Esophagus squamous epithelium (tissue), 5 donors: ENCODE measurements at regions of chr14 and their contacts with region 1.

Region 1: DNA sequence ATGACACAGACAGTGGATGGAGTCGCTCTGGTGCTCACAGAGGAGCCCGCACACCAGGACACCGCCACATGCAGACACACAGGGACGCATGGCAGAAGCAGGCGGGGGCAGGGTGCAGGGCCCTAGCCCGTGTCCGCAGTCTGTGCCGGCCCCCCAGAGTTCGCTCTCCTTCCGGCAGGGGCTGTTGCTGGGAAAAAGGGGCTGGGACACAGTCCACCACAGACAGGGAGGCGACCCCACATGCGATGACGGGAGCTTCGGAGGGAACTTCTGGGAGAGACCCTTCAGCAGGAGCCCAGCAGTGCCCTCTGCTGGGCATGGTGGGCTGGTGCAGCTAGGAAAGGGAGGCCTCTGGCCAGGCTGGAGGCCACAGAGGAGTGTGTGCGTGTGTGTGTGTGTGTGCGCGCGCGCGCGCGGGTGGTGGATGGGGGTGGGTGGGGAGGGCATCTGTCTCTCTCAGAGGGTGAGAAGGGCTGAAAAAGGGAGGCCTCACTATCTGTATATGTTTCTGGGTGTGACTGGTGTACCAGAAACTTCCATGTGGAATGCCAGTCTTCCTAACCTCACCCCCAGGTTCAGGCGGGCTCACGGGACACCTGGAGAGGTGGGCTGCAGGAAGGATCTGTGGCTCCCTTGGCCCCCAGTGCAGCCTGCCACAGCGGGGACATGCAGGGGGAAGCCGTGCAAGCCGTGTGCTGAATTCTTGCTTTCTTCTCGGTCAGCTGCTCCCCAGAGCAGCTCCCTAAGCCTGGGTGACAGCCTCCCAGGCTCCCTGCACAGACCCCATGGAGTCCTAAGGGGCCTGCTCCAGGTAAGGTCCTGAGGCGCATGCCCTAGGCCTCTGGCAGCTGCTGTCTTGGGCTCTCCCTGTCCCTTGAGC is 60.7 kb downstream of the PLEKHG3 start:
- DNase-seq: no peak
- H3K4me3 ChIP-seq: peak overlapping the region in 3 of 4 donors; percentile 21 to 56 (median 29)
- H3K27ac ChIP-seq: peak overlapping the region; percentile 11 to 86 (median 48)
- H3K4me1 ChIP-seq: peaks cover 24 to 55% (median 34%) of the 10 kb centered on the region in 3 donors
- H3K27me3 ChIP-seq: no peaks in the 10 kb centered on the region
- CTCF ChIP-seq: peak; percentile 85 to 93 (median 91)
- POLR2A ChIP-seq: no peak

Region 2: GRCh38 chr14:64337901-64338615 is 426.8 kb before region 1 on chr14:
- intact Hi-C with region 1: no loop called
- DNase-seq: no peak
- H3K4me3 ChIP-seq: peak overlapping the region; percentile 53 to 84 (median 71)
- H3K27ac ChIP-seq: peak overlapping the region; percentile 84 to 94 (median 88)
- H3K4me1 ChIP-seq: peaks cover 4 to 21% (median 4%) of the 10 kb centered on the region in 3 donors
- H3K27me3 ChIP-seq: no peaks in the 10 kb centered on the region
- CTCF ChIP-seq: no peak
- POLR2A ChIP-seq: peak in 1 of 4 donors; percentile 43

Region 3: GRCh38 chr14:64671591-64671990 is 93.3 kb before region 1 on chr14:
- intact Hi-C with region 1: loop called (anchors 5 kb)
- DNase-seq: no peak
- H3K4me3 ChIP-seq: no peak overlapping the region
- H3K27ac ChIP-seq: no peak overlapping the region
- H3K4me1 ChIP-seq: peaks cover 15 to 63% (median 26%) of the 10 kb centered on the region in 3 donors
- H3K27me3 ChIP-seq: no peaks in the 10 kb centered on the region
- CTCF ChIP-seq: peak; percentile 39 to 83 (median 72)
- POLR2A ChIP-seq: no peak

Region 4: GRCh38 chr14:64812217-64812811 is 47.4 kb after region 1 on chr14:
- intact Hi-C with region 1: no loop called
- DNase-seq: no peak
- H3K4me3 ChIP-seq: no peak overlapping the region
- H3K27ac ChIP-seq: no peak overlapping the region
- H3K4me1 ChIP-seq: peaks cover 0 to 6% (median 6%) of the 10 kb centered on the region in 3 donors
- H3K27me3 ChIP-seq: peaks cover 0 to 13% (median 0%) of the 10 kb centered on the region in 4 donors
- CTCF ChIP-seq: no peak
- POLR2A ChIP-seq: no peak

Region 5: DNA sequence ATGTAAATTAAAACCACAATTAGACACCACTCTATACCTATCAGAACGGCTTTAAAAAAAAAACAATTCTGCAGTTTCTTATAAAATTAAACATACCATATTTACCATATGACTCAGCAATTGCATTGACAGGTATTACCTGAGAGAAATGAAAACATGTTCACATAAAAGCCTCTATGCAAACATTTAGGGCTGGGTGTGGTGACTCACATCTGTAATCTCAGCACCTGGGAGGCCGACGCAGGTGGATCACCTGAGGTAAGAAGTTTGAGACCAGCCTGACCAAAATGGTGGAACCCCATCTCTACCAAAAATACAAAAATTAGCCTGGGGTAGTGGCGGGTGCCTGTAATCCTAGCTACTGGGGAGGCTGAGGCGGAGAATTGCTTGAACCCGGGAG is 73.8 kb after region 1 on chr14:
- intact Hi-C with region 1: no loop called
- DNase-seq: no peak
- H3K4me3 ChIP-seq: no peak overlapping the region
- H3K27ac ChIP-seq: no peak overlapping the region
- H3K4me1 ChIP-seq: peaks cover 0 to 11% (median 0%) of the 10 kb centered on the region in 3 donors
- H3K27me3 ChIP-seq: peaks cover 0 to 51% (median 0%) of the 10 kb centered on the region in 4 donors
- CTCF ChIP-seq: no peak
- POLR2A ChIP-seq: no peak